PC-9 (cell line): ENCODE measurements at regions of chr6 and their contacts with region 1.

Region 1: DNA sequence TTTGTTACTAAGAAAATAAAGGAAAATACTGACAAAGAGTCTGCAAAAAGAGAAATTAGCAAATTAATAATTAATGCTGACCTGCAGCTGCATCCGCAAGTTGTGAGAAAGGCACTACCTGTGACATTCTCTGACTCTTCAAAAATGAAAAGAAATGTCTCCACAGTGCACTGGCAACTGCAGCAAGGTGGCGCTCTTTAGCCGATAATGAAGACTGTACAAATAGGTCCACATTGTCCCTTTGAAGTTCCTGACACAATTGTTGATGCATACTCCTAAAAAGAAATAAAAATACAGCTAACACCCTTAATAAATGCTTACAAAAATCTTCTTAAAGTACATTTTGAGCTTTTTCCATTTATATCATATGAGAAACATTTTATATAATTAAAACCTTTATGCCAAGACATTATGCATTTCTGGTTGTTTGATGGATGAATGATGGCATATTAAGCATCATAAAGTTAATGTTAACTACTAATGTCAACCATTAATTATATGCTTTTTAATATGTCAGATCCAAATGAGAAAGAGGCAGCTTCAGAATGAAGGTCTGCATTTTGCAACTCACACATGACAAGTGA is 96.5 kb downstream of the MMS22L start:
- DNase-seq: peak in 1 of 2 experiments; percentile 39
- H3K4me3 ChIP-seq: no peak overlapping the region
- H3K27ac ChIP-seq: no peak overlapping the region
- H3K4me1 ChIP-seq: no peaks in the 10 kb centered on the region
- H3K27me3 ChIP-seq: no peaks in the 10 kb centered on the region
- CTCF ChIP-seq: peak; percentile 82

Region 2: GRCh38 chr6:96787846-96788580 is 398.5 kb before region 1 on chr6:
- CTCF ChIA-PET with region 1: no interaction called
- POLR2A ChIA-PET with region 1: no interaction called
- intact Hi-C with region 1: no loop called
- DNase-seq: no peak
- H3K4me3 ChIP-seq: no peak overlapping the region
- H3K27ac ChIP-seq: no peak overlapping the region
- H3K4me1 ChIP-seq: no peaks in the 10 kb centered on the region
- H3K27me3 ChIP-seq: no peaks in the 10 kb centered on the region
- CTCF ChIP-seq: no peak

Region 3: DNA sequence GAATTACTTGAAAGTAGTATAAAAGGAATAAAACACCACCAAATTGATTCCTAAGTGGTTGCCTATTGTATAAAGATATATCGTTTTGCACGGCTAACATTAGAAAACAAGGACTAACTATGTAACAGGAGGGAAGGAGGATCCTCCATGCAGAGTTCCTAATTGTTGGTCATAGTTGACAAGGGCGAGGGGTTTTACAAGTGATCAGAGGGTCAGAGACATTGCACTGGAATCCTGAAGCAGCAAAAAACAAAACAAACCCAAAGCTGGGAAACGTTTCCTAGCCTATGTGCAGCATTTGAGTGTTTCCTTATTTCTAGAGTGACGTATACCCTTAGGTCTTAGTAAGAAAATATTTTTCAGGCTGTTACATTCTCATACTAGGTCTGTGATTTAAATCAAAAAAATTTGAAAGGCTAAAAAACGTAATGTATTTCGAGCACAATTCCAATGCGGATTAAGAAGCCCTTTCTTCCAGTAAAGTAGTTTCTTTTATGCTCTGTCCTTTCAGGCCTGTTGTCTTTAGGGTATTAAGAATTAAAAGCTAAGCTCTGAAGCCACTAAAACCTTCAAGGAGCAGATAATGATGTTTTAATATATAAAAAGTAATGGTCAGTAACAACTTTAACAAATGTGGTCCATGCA is 470.3 kb after region 1 on chr6:
- CTCF ChIA-PET with region 1: no interaction called
- POLR2A ChIA-PET with region 1: interaction called, 19 read pairs
- intact Hi-C with region 1: no loop called
- DNase-seq: no peak
- H3K4me3 ChIP-seq: no peak overlapping the region
- H3K27ac ChIP-seq: no peak overlapping the region
- H3K4me1 ChIP-seq: no peaks in the 10 kb centered on the region
- H3K27me3 ChIP-seq: no peaks in the 10 kb centered on the region
- CTCF ChIP-seq: no peak